CD14-positive monocyte (primary cell): ENCODE measurements at regions of chr2 and their contacts with region 1.

Region 1: DNA sequence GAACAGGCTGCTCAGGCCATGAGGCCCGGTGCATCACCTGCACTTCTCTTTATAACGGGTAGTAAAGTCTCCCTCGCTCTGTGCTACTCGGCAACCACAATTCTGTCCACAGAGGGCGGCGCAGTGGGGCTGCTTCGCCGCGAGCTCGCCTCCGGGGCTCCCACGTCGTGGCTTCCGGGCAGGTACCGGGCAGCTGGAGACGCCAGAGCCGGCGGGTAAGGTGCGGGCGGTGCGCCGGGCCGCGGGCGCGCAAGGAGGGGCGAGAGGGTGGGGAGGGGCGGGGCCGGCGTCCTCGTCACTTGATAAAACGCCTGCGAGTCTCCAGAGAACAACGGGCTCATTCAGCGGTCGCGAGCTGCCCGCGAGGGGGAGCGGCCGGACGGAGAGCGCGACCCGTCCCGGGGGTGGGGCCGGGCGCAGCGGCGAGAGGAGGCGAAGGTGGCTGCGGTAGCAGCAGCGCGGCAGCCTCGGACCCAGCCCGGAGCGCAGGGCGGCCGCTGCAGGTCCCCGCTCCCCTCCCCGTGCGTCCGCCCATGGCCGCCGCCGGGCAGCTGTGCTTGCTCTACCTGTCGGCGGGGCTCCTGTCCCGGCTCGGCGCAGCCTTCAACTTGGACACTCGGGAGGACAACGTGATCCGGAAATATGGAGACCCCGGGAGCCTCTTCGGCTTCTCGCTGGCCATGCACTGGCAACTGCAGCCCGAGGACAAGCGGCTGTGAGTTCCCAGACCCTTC is at the start of gene ITGA6:
- DNase-seq: peak in 2 of 3 donors; percentile 19 to 24
- H3K4me3 ChIP-seq: peak within 1 kb of the TSS; percentile 47 to 79 (median 59)
- H3K4me3 Mint-ChIP-seq: peak within 1 kb of the TSS; percentile 79 to 91
- H3K27ac ChIP-seq: no peak within 1 kb of the TSS
- H3K27ac Mint-ChIP-seq: peak within 1 kb of the TSS in 1 of 7 donors; percentile 50
- H3K4me1 ChIP-seq: peaks cover 11 to 27% of the 10 kb centered on the region in 2 donors
- H3K4me1 Mint-ChIP-seq: peaks cover 24% of the 10 kb centered on the region
- H3K27me3 ChIP-seq: peaks cover 50 to 71% of the 10 kb centered on the region in 2 donors
- H3K27me3 Mint-ChIP-seq: peaks cover 46 to 65% (median 58%) of the 10 kb centered on the region in 3 donors
- CTCF ChIP-seq: no peak
- polyA plus RNA-seq, gene ITGA6: 0.01 to 0.36 (median 0.20) TPM

Region 2: GRCh38 chr2:172293956-172294355 is 133.5 kb before region 1 on chr2:
- intact Hi-C with region 1: loop called in 1 of 2 experiments (anchors 10 kb)
- DNase-seq: peak; percentile 33 to 45 (median 38)
- H3K4me3 ChIP-seq: peak overlapping the region in 1 of 3 experiments; percentile 10
- H3K4me3 Mint-ChIP-seq: peak overlapping the region in 1 of 2 donors; percentile 19
- H3K27ac ChIP-seq: no peak overlapping the region
- H3K27ac Mint-ChIP-seq: peak overlapping the region in 3 of 7 donors; percentile 59 to 80 (median 63)
- H3K4me1 ChIP-seq: peaks cover 9 to 13% of the 10 kb centered on the region in 2 donors
- H3K4me1 Mint-ChIP-seq: peaks cover 14% of the 10 kb centered on the region
- H3K27me3 ChIP-seq: no peaks in the 10 kb centered on the region
- H3K27me3 Mint-ChIP-seq: peaks cover 2 to 13% (median 2%) of the 10 kb centered on the region in 3 donors
- CTCF ChIP-seq: no peak

Region 3: GRCh38 chr2:172350839-172351479 is 76.5 kb before region 1 on chr2:
- intact Hi-C with region 1: no loop called
- DNase-seq: no peak
- H3K4me3 ChIP-seq: no peak overlapping the region
- H3K4me3 Mint-ChIP-seq: no peak overlapping the region
- H3K27ac ChIP-seq: no peak overlapping the region
- H3K27ac Mint-ChIP-seq: no peak overlapping the region
- H3K4me1 ChIP-seq: no peaks in the 10 kb centered on the region
- H3K4me1 Mint-ChIP-seq: peaks cover 2% of the 10 kb centered on the region
- H3K27me3 ChIP-seq: no peaks in the 10 kb centered on the region
- H3K27me3 Mint-ChIP-seq: peaks cover 0 to 1% (median 0%) of the 10 kb centered on the region in 3 donors
- CTCF ChIP-seq: no peak

Region 4: GRCh38 chr2:173027181-173028128 is 600.0 kb after region 1 on chr2:
- intact Hi-C with region 1: no loop called
- DNase-seq: peak; percentile 81 to 86 (median 82)
- H3K4me3 ChIP-seq: no peak overlapping the region
- H3K4me3 Mint-ChIP-seq: no peak overlapping the region
- H3K27ac ChIP-seq: no peak overlapping the region
- H3K27ac Mint-ChIP-seq: no peak overlapping the region
- H3K4me1 ChIP-seq: peaks cover 0 to 6% of the 10 kb centered on the region in 2 donors
- H3K4me1 Mint-ChIP-seq: peaks cover 6% of the 10 kb centered on the region
- H3K27me3 ChIP-seq: no peaks in the 10 kb centered on the region
- H3K27me3 Mint-ChIP-seq: peaks cover 0 to 4% (median 4%) of the 10 kb centered on the region in 3 donors
- CTCF ChIP-seq: peak; percentile 91